ENCODE measurements at regions of chr9 and their contacts with region 1.

Region 1: GRCh38 chr9:81499021-81499454 is 190.3 kb downstream of the TLE1 start:
- DNase-seq: no peak
- H3K4me3 ChIP-seq: no peak overlapping the region
- CTCF ChIP-seq: no peak

Region 2: GRCh38 chr9:81465468-81466011 is 33.5 kb before region 1 on chr9:
- CTCF ChIA-PET with region 1: no interaction called
- POLR2A ChIA-PET with region 1: no interaction called
- DNase-seq: no peak
- H3K4me3 ChIP-seq: no peak overlapping the region
- CTCF ChIP-seq: no peak

Region 3: GRCh38 chr9:81529556-81530195 is 30.6 kb after region 1 on chr9:
- CTCF ChIA-PET with region 1: interaction called, 15 read pairs
- POLR2A ChIA-PET with region 1: no interaction called
- DNase-seq: no peak
- H3K4me3 ChIP-seq: no peak overlapping the region
- CTCF ChIP-seq: no peak

Measured in AG04449 (cell line).